ENCODE measurements at regions of chrX and their contacts with region 1.

Region 1: DNA sequence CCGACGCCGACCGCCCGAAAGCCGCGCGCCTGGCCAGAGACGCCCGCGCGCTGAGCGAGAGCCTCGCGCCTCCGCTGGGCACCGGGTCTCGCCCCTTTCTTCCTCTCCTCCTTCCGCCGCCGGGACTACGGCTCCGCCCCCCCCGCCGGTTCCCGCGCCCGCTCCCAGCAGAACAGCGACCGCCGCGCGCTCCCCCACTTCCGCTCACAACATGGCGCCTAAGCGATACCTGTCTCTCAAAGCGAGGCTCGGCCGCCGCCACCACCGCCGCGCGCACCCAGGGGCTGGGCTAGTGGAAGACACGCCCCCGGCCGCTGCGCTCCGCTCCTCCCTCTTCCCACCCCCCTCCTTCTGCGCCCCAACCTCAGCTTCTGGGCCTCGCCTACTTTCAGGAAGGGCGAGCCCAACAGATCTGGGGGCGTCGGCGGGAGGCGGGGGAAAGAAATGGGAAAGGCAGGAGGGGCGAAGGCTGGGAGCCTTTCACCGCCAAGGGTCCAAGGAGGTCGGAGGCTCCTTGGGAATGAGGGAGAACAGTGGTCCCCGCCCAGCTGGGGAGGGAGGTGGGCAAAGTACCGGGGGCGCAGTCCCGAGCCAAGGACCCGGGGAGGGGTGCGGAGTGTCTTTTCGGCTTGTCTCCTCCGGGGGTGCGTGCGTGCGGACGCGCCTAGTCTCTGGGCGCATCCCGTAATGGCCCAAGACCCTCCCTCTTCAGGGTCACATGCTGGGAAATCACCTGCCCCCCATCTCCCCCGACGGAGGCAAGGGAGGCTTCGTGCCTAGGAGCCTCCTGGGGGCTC is at the start of gene RPS6KA3:
- DNase-seq: peak; percentile 97
- ATAC-seq: peak; percentile 96
- total RNA-seq, gene RPS6KA3: 34.8 TPM

Region 2: GRCh38 chrX:20141281-20142220 is 125.5 kb before region 1 on chrX and contains the start of gene EIF1AX:
- intact Hi-C with region 1: loop called (anchors 5 kb)
- DNase-seq: peak; percentile 97
- ATAC-seq: peak; percentile 100
- total RNA-seq, gene EIF1AX: 60.2 TPM

Region 3: GRCh38 chrX:20217275-20217674 is 49.7 kb before region 1 on chrX:
- intact Hi-C with region 1: loop called (anchors 5 kb)
- DNase-seq: no peak
- ATAC-seq: no peak

Region 4: DNA sequence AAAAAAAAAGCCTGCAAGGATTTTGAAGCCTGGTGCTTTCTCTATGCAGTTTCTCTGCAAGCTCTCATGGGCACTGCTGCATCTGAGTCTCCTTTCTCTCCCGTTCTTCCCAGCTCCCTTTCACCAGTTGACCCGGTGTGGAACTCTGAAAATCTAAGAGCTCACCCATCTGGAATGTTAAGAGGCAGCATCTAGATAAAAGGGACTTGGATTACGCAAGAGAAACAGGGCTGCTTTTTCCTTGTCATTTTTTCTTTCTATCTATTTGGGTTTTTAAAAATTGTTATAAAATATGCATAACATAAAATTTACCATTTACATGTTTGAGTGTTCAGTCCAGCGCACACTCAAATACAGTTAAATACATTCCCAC is 94.9 kb after region 1 on chrX:
- intact Hi-C with region 1: loop called (anchors 2 kb)
- DNase-seq: no peak
- ATAC-seq: peak; percentile 88

Region 5: DNA sequence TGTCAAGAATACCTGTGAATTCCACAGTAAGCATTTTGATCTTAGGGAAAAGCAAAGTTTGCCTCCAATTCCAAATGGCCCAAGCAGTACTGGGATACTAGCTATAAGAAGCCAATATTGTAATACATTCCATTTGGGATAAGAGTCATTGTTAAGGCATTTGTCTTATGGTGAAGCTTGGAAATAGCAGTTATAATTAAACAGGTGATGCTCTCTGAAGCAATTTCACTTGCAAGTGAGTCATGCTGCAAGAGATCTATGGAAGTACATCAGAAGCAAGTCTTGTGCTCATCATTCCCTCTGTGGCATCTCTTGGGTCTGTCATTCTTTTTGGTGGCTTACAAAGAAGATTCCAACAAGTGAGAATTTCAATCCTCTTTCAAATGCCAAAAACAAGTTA is 386.1 kb after region 1 on chrX:
- intact Hi-C with region 1: no loop called
- DNase-seq: no peak
- ATAC-seq: no peak

Measured in Right ventricle myocardium inferior (tissue), 1 donor.